Dendritic cell treated with granulocyte-macrophage colony-stimulating factor and Interleukin-4, amounts not matched to agents 40 ng/mL and 50 ng/mL, for 4 days (primary cell): ENCODE measurements at regions of chr16 and their contacts with region 1.

Region 1: GRCh38 chr16:48385272-48386150 is at the start of gene SIAH1:
- H3K4me3 Mint-ChIP-seq: peak within 1 kb of the TSS; percentile 97
- H3K27ac Mint-ChIP-seq: peak within 1 kb of the TSS; percentile 100
- H3K4me1 Mint-ChIP-seq: peaks cover 54% of the 10 kb centered on the region
- H3K27me3 Mint-ChIP-seq: no peaks in the 10 kb centered on the region

Region 2: GRCh38 chr16:48365581-48366164 is 19.8 kb before region 1 on chr16:
- intact Hi-C with region 1: loop called (anchors 2 kb)
- H3K4me3 Mint-ChIP-seq: peak overlapping the region; percentile 85
- H3K27ac Mint-ChIP-seq: peak overlapping the region; percentile 94
- H3K4me1 Mint-ChIP-seq: peaks cover 79% of the 10 kb centered on the region
- H3K27me3 Mint-ChIP-seq: no peaks in the 10 kb centered on the region

Region 3: GRCh38 chr16:48535831-48536613 is 150.5 kb after region 1 on chr16:
- intact Hi-C with region 1: loop called (anchors 2 kb)
- H3K4me3 Mint-ChIP-seq: peak overlapping the region; percentile 39
- H3K27ac Mint-ChIP-seq: peak overlapping the region; percentile 96
- H3K4me1 Mint-ChIP-seq: peaks cover 76% of the 10 kb centered on the region
- H3K27me3 Mint-ChIP-seq: no peaks in the 10 kb centered on the region